Right ventricle myocardium inferior (tissue), 1 donor: ENCODE measurements at regions of chr11 and their contacts with region 1.

Region 1: DNA sequence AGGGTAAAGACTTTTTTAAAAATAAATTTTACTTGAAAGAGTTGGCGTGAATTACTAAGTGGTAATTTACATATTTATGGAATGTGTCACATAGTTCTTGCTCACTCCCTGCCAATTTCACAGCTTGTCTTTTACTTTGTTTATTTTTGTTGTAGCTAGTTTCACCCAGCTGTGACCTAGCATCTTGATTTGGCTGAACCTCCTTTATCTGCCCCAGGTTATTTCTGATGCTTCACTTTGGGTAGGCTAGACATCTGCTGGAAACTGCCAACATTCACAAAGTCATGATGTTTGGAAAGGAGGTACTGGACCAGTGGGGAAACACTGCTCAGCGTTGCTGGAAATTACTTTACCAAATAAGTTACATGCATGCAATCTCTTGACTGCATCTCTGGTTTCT is 1676.0 kb upstream of the RAG2 start:
- DNase-seq: no peak
- ATAC-seq: no peak

Region 2: GRCh38 chr11:38219636-38220035 is 54.4 kb before region 1 on chr11:
- intact Hi-C with region 1: loop called (anchors 10 kb)
- DNase-seq: no peak
- ATAC-seq: no peak